Right ventricle myocardium superior (tissue), 1 donor: ENCODE measurements at regions of chr1 and their contacts with region 1.

Region 1: DNA sequence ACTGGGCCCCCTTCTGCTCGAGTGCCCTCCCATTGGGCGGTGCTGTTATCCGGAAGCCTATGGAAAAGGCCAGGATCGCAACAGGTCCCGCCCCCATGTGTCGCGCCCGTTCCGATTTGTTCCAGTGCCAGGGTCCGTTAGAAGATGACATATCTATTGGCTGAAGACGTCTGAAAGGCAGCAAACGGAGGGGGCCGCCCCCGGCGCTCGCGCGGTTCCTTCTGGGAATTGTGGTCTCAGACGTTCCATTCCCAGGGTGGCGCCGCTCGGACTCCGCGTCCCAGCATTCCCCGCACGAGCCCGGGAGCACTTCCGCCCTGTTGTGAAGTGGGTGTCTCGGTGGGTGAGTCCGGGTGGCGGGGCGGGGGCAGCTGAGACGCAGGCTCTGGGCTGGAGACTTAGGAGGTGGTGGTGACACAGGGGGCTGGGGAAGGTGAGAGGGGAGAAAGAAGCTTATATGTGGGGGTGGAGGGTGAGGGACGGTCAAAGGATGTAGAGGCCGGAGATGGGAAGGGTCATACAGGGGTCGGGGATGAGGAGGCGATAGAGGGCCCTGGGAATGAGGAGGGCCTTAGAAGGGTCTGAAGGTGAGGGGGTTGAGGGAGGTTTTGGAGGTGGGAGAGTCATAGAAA is at the start of gene ZSCAN20:
- DNase-seq: peak; percentile 99
- ATAC-seq: peak; percentile 92
- total RNA-seq, gene ZSCAN20: 4.4 TPM

Region 2: DNA sequence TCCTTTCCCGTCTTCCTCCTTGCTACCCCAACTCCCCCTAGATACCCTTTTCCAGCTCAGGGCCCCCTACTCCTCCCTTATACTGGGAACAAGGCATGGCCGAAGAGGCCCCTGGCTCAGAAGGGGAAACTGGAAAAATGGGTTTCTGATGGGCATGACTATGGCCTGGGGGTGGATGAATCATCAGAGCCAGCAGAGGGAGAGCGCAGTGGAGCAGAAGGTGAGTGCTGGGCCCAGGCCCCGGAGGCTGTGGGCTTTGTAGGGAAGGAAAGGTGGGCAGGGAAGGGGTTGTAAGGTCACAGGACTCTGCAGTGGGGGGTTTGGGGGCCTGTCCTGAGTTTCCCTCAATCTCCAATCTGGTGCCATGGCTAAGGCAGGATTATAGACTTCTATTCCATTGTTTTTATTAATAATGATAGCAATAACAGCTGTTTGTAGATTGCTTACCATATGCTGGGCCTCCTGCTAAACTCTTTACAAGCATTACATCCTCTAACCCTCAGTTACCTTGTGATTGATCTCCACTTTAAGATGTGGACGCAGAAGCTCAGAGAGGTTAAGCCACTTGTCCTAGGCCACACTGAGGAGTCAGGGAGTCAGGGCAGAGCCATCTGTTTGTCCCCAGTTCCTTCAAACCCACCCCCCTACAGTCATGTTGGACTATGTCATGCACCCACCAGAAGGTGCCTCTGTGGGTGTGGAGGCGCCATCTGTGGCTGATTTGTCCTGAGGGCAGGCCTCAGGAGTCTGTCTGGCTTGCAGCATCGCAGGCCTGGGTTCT is 252.4 kb before region 1 on chr1:
- intact Hi-C with region 1: loop called (anchors 10 kb)
- DNase-seq: no peak
- ATAC-seq: no peak

Region 3: GRCh38 chr1:33289613-33290154 is 182.8 kb before region 1 on chr1:
- intact Hi-C with region 1: no loop called
- DNase-seq: peak; percentile 38
- ATAC-seq: peak; percentile 68

Region 4: DNA sequence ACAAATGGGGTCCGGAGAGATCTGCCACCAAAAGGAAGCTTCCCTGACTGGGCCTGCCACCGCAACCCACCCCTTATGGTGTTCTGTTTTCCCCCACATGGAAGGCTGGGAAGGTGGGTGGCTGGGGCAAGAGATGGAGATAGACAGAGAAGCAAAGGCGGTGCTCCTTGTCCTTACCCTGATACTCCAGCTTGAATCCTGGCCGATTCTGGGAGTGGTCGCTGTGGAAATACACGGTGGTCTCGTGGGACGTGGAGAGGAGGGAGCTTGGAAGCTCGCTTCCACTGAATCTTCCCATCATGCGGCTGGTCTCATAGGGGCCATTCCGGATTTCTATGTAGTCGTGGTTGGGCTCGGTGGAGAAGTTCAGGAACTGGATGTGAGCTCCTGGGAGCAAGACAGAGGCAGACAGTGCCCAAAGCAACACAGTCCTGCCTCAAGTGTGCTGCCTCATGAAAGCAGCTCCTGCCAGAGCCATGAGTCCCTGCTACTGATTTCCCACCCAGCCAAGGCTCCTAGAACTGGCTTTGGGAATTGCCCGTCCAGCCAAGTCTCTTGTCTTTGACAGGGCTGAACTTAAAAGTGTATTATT is 138.5 kb after region 1 on chr1:
- intact Hi-C with region 1: loop called (anchors 5 kb)
- DNase-seq: no peak
- ATAC-seq: peak; percentile 41